ENCODE measurements at regions of chr5 and their contacts with region 1.

Region 1: DNA sequence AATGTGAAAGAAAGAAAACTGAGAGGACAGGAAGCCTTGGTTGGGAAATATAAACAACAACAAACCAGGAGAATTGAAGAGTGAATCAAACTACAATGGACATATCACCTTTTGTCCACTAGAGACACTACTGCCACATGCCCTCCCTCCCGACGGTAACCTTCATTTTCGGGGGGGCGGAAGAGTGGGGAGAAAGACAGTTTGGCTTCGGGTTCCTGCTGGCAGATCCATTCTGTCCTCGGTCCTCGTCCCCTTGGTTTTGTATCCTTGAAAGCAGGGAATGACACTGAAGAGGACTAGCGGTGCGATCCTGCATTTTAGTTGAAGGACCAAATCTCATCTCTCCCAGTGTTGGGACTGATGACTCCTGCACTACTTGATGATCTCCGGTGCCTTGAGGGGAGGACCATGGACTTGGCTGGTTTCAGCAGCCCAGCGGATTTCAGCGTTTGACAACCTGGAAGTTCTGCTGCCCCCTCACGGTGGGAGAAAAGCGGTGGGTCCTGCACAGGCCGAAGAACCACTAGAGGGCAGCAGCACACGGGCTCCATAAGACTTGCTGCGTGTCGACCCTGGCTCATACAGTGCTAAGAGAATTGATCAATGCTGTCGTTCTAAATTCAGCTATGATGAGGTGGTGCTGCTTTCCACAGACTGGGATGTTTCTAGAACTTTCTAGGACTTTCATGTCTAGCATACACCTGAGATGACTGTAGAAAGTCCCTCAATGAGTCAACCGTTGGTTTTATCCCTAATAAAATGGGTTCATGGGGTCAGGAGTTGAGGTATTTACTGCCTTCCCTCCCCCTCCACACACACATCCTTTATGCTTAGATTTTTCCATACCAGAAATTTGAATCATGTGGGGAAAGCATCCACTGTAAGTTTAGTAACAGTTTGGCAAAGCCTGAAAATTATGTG is 15.1 kb upstream of the ZNF131 start:
- DNase-seq: peak; percentile 79
- ATAC-seq: peak; percentile 99
- H3K4me3 ChIP-seq: peak overlapping the region; percentile 73
- H3K27ac ChIP-seq: peak overlapping the region; percentile 55
- H3K4me1 ChIP-seq: peaks cover 5% of the 10 kb centered on the region
- H3K27me3 ChIP-seq: no peaks in the 10 kb centered on the region
- CTCF ChIP-seq: peak; percentile 100
- EP300 ChIP-seq: no peak
- POLR2A ChIP-seq: peak; percentile 26; the same call in 1 of the 2 replicates
- RAD21 ChIP-seq: peak; percentile 93

Region 2: GRCh38 chr5:43008369-43009153 is 97.1 kb before region 1 on chr5:
- CTCF ChIA-PET with region 1: no interaction called
- POLR2A ChIA-PET with region 1: no interaction called
- RAD21 ChIA-PET with region 1: no interaction called
- SMC1A ChIA-PET with region 1: no interaction called
- in situ Hi-C with region 1: no loop called
- intact Hi-C with region 1: loop called (anchors 5 kb)
- DNase-seq: no peak
- ATAC-seq: peak; percentile 72
- H3K4me3 ChIP-seq: peak overlapping the region; percentile 67
- H3K27ac ChIP-seq: peak overlapping the region; percentile 94
- H3K4me1 ChIP-seq: peaks cover 13% of the 10 kb centered on the region
- H3K27me3 ChIP-seq: no peaks in the 10 kb centered on the region
- CTCF ChIP-seq: peak in 2 of 3 experiments; percentile 5 to 13; a peak in 2 of 6 replicates
- EP300 ChIP-seq: peak in 1 of 2 experiments; percentile 77; a peak in 2 of 4 replicates
- POLR2A ChIP-seq: no peak
- RAD21 ChIP-seq: no peak

Region 3: DNA sequence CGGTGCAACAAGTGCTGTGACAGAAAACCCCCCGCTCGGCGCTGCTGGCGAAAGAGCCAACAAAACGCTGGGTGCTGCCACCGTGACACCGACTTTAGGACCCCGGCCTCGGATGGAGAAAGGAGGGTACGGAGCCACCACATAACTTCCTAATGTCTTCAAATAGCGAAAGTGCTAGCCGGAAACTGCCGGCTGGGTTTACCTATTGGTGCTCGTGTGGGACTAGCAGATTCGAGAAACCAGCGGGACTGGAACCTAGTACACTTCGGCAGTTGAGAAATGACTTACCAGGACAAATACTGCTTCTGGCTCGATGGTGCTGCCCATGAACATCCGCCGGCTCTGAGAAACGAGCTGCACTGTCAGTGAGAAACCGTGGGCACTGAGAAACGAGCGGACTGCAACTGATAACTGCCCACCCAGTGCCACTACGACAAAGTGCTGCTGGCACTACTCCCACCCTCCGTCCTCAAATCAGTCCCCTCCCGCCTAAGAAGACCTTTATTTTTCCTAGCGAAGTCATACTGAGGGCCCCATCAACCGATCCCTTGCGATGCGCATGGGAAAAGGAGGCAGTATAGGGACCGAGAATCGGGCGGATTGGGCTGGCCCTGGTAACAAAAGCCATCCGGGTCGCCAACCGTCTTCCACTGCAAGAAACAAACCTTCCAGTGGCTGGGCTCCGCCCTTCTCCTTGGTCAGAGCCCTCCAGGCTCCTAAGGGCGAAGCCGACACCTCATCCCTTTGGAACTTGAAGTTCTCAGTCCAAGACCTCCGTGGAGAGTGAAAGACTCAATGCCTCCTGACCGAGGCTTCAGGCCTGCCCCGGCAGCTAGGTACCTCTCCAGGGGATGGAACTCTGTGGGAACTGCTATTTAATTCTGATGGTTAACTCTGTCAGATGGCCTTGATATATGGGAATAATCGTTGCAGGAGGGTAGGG is 38.6 kb before region 1 on chr5:
- CTCF ChIA-PET with region 1: interaction called, 18 read pairs
- POLR2A ChIA-PET with region 1: interaction called, 4 read pairs
- RAD21 ChIA-PET with region 1: interaction called, 3 read pairs
- SMC1A ChIA-PET with region 1: interaction called, 9 read pairs
- in situ Hi-C with region 1: no loop called
- intact Hi-C with region 1: no loop called
- DNase-seq: peak; percentile 74
- ATAC-seq: peak; percentile 58
- H3K4me3 ChIP-seq: peak overlapping the region; percentile 91
- H3K27ac ChIP-seq: peak overlapping the region; percentile 100
- H3K4me1 ChIP-seq: peaks cover 10% of the 10 kb centered on the region
- H3K27me3 ChIP-seq: no peaks in the 10 kb centered on the region
- CTCF ChIP-seq: no peak
- EP300 ChIP-seq: peak in 1 of 2 experiments; percentile 100; a peak in 2 of 4 replicates
- POLR2A ChIP-seq: peak; percentile 47; the same call in 1 of the 2 replicates
- RAD21 ChIP-seq: no peak

Region 4: DNA sequence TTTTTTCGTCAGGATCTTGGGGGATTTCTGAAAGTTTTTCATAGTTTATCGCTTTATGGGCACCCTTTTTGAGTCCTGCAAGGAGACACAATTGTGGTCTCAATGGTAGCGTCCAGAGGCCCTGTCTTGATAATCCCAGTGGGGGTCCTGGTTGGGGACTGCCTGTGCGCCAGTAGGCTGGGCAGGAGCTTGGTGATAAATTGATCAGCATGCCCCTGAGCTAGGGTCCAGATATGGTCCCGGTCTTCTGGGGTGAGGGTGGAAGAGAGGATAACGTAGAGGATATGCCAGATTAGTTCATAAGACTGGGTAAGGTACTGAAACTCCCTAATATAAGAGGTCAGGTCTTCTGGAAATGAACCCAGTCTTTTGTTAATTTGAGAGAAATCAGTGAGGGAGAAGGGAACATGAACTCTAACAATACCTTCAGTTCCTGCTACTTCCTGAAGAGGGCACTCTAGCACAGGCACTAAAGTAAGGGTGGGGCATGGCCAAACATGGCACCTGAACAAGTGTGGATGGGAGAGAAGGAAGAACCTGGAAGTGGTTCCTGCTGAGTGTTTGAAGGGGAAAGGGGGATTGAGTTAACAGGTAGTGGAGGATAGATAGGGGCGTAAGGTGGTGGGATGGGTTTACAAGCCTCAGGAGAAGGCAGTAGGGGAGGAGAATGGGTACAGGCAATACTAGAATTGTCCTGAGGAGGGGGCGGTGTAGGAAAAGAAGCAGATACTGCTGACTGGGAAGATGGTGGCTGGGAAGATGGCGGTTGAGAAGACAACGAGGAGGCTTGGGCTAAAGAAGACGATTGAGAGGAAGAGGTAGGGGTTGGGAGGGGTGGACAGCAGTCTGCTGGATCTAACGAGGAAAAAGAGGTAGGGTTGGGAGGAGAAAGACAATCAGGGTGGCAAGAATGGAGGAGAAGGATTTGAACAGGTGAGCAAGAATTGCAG is 31.8 kb before region 1 on chr5:
- CTCF ChIA-PET with region 1: interaction called, 18 read pairs
- POLR2A ChIA-PET with region 1: interaction called, 5 read pairs
- RAD21 ChIA-PET with region 1: interaction called, 3 read pairs
- SMC1A ChIA-PET with region 1: interaction called, 9 read pairs
- in situ Hi-C with region 1: no loop called
- intact Hi-C with region 1: loop called (anchors 1 kb)
- DNase-seq: no peak
- ATAC-seq: peak; percentile 66
- H3K4me3 ChIP-seq: no peak overlapping the region
- H3K27ac ChIP-seq: no peak overlapping the region
- H3K4me1 ChIP-seq: 0 out of 2 replicates have a peak, but pooled peaks cover 4% of the 10 kb centered on the region
- H3K27me3 ChIP-seq: no peaks in the 10 kb centered on the region
- CTCF ChIP-seq: peak; percentile 50 to 71 (median 71); a peak in 5 of 6 replicates
- EP300 ChIP-seq: no peak
- POLR2A ChIP-seq: no peak
- RAD21 ChIP-seq: peak; percentile 81

Region 5: GRCh38 chr5:43140286-43140685 is 34.7 kb after region 1 on chr5:
- CTCF ChIA-PET with region 1: interaction called, 19 read pairs
- POLR2A ChIA-PET with region 1: interaction called, 6 read pairs
- RAD21 ChIA-PET with region 1: no interaction called
- SMC1A ChIA-PET with region 1: interaction called, 5 read pairs
- in situ Hi-C with region 1: no loop called
- intact Hi-C with region 1: no loop called
- DNase-seq: no peak
- ATAC-seq: no peak
- H3K4me3 ChIP-seq: no peak overlapping the region
- H3K27ac ChIP-seq: no peak overlapping the region
- H3K4me1 ChIP-seq: peaks cover 18% of the 10 kb centered on the region
- H3K27me3 ChIP-seq: no peaks in the 10 kb centered on the region
- CTCF ChIP-seq: no peak
- EP300 ChIP-seq: no peak
- POLR2A ChIP-seq: no peak
- RAD21 ChIP-seq: no peak

Region 6: DNA sequence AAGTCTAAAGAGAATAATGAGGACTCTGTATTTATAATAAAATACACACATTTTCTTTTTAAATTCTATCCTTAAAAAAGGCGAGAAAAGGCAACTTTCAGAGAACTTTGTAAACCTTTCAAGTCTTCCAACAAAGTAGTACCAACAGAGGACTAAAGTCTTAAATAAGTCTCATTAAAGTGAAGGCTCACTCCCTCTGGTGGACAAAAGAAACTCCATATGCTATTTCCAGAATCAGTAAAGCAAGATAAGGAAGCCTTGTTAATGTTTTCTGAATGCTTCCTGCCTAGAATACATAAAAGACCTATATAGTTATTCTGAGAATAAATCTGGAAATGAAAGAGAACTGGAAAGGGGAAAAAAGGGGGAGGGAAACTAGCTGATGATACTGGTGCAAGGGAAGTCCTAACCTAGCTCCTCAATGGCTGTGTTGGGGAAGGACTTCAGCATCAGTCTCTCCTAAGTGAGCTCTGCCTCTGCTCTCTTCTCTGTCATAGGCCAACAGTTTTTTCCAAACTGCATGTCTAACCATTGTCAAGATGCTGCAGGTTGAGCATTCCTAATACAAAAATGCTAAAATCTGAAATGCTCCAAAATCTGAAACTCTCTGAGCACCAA is 200.4 kb after region 1 on chr5:
- CTCF ChIA-PET with region 1: interaction called, 14 read pairs
- POLR2A ChIA-PET with region 1: no interaction called
- RAD21 ChIA-PET with region 1: interaction called, 7 read pairs
- SMC1A ChIA-PET with region 1: interaction called, 11 read pairs
- in situ Hi-C with region 1: no loop called
- intact Hi-C with region 1: loop called (anchors 2 kb)
- DNase-seq: peak; percentile 30
- ATAC-seq: peak; percentile 72
- H3K4me3 ChIP-seq: peak overlapping the region; percentile 27; the same call in 1 of the 2 replicates
- H3K27ac ChIP-seq: no peak overlapping the region
- H3K4me1 ChIP-seq: peaks cover 4% of the 10 kb centered on the region; the same call in 1 of the 2 replicates
- H3K27me3 ChIP-seq: no peaks in the 10 kb centered on the region
- CTCF ChIP-seq: peak; percentile 56 to 69 (median 67)
- EP300 ChIP-seq: no peak
- POLR2A ChIP-seq: no peak
- RAD21 ChIP-seq: peak; percentile 77

Region 7: GRCh38 chr5:43313035-43313853 is 207.6 kb after region 1 on chr5 and contains the start of gene HMGCS1:
- CTCF ChIA-PET with region 1: interaction called, 14 read pairs
- POLR2A ChIA-PET with region 1: interaction called, 4 read pairs
- RAD21 ChIA-PET with region 1: interaction called, 9 read pairs
- SMC1A ChIA-PET with region 1: interaction called, 11 read pairs
- in situ Hi-C with region 1: no loop called
- intact Hi-C with region 1: loop called (anchors 2 kb)
- DNase-seq: peak; percentile 100
- ATAC-seq: peak; percentile 92
- H3K4me3 ChIP-seq: peak within 1 kb of the TSS; percentile 79
- H3K27ac ChIP-seq: peak within 1 kb of the TSS; percentile 84
- H3K4me1 ChIP-seq: peaks cover 6% of the 10 kb centered on the region
- H3K27me3 ChIP-seq: no peaks in the 10 kb centered on the region
- CTCF ChIP-seq: peak in 2 of 3 experiments; percentile 6 to 16; a peak in 1 of 6 replicates
- EP300 ChIP-seq: peak in 1 of 2 experiments; percentile 60; a peak in 1 of 4 replicates
- POLR2A ChIP-seq: peak; percentile 99
- RAD21 ChIP-seq: peak; percentile 23; the same call in 1 of the 2 replicates
- polyA plus RNA-seq, gene HMGCS1: 74.9 to 94.1 TPM

Region 8: GRCh38 chr5:43437062-43437660 is 331.5 kb after region 1 on chr5:
- CTCF ChIA-PET with region 1: no interaction called
- POLR2A ChIA-PET with region 1: no interaction called
- RAD21 ChIA-PET with region 1: no interaction called
- SMC1A ChIA-PET with region 1: no interaction called
- in situ Hi-C with region 1: no loop called
- intact Hi-C with region 1: no loop called
- DNase-seq: no peak
- ATAC-seq: peak; percentile 33; the same call in 2 of the 3 replicates
- H3K4me3 ChIP-seq: no peak overlapping the region
- H3K27ac ChIP-seq: no peak overlapping the region
- H3K4me1 ChIP-seq: no peaks in the 10 kb centered on the region
- H3K27me3 ChIP-seq: no peaks in the 10 kb centered on the region
- CTCF ChIP-seq: no peak
- EP300 ChIP-seq: no peak
- POLR2A ChIP-seq: no peak
- RAD21 ChIP-seq: no peak

Measured in GM12878 (cell line).